BJ (cell line): ENCODE measurements at regions of chr3 and their contacts with region 1.

Region 1: DNA sequence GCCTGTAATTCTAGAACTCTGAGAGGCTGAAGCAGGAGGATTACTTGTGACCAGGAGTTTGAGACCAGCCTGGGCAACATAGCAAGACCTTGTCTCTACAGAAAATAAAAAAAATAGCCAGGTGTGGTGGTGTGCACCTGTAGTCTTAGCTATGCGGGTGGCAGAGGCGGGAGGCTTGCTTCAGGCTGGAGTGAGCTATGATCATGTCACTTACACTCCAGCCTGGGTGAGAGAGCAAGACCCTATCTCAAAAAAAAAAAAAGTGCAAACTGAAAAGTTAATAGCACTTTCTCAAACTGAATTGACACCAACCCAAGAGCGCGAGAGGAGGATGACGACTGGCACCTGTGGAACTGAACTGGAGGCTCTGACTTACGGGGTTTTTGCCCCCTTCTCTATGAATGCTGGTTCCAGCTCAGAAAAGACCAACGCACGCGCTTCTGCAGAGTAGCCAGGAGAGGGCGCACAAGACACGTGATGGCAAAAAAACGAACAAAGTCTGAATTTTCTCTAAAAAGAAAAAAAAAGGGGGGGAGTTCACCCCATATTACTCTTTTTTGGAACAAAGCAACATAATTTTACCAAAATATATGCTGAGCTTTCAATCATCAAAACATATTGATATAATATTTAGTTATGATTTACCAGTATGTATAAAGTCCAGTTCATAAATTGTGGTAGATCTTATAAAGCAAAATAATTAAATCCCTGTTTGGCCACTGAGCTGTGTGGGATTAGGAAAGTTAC is 23.7 kb downstream of the CFAP92 start:
- DNase-seq: no peak
- H3K4me3 ChIP-seq: no peak overlapping the region
- H3K27me3 ChIP-seq: peaks cover 15% of the 10 kb centered on the region
- CTCF ChIP-seq: peak; percentile 92

Region 2: GRCh38 chr3:128814519-128815317 is 155.4 kb before region 1 on chr3:
- CTCF ChIA-PET with region 1: no interaction called
- POLR2A ChIA-PET with region 1: no interaction called
- DNase-seq: no peak
- H3K4me3 ChIP-seq: no peak overlapping the region
- H3K27me3 ChIP-seq: no peaks in the 10 kb centered on the region
- CTCF ChIP-seq: no peak

Region 3: GRCh38 chr3:128910006-128910405 is 60.2 kb before region 1 on chr3:
- CTCF ChIA-PET with region 1: no interaction called
- POLR2A ChIA-PET with region 1: no interaction called
- DNase-seq: no peak
- H3K4me3 ChIP-seq: no peak overlapping the region
- H3K27me3 ChIP-seq: no peaks in the 10 kb centered on the region
- CTCF ChIP-seq: no peak

Region 4: GRCh38 chr3:128950223-128950938 is 19.8 kb before region 1 on chr3:
- CTCF ChIA-PET with region 1: interaction called, 11 read pairs
- POLR2A ChIA-PET with region 1: no interaction called
- DNase-seq: no peak
- H3K4me3 ChIP-seq: no peak overlapping the region
- H3K27me3 ChIP-seq: no peaks in the 10 kb centered on the region; the same call in none of the 2 replicates
- CTCF ChIP-seq: peak; percentile 30; the same call in 1 of the 2 replicates

Region 5: GRCh38 chr3:128984596-128984995 is 14.4 kb after region 1 on chr3:
- CTCF ChIA-PET with region 1: interaction called, 21 read pairs
- POLR2A ChIA-PET with region 1: no interaction called
- DNase-seq: no peak
- H3K4me3 ChIP-seq: no peak overlapping the region
- H3K27me3 ChIP-seq: peaks cover 12% of the 10 kb centered on the region
- CTCF ChIP-seq: no peak

Region 6: GRCh38 chr3:128993461-128994173 is 23.5 kb after region 1 on chr3 and contains the start of gene CFAP92:
- CTCF ChIA-PET with region 1: interaction called, 21 read pairs
- POLR2A ChIA-PET with region 1: no interaction called
- DNase-seq: no peak
- H3K4me3 ChIP-seq: peak within 1 kb of the TSS; percentile 37
- H3K27me3 ChIP-seq: peaks cover 19% of the 10 kb centered on the region
- CTCF ChIP-seq: no peak
- polyA plus RNA-seq, gene CFAP92: not detected in 2 replicates

Region 7: DNA sequence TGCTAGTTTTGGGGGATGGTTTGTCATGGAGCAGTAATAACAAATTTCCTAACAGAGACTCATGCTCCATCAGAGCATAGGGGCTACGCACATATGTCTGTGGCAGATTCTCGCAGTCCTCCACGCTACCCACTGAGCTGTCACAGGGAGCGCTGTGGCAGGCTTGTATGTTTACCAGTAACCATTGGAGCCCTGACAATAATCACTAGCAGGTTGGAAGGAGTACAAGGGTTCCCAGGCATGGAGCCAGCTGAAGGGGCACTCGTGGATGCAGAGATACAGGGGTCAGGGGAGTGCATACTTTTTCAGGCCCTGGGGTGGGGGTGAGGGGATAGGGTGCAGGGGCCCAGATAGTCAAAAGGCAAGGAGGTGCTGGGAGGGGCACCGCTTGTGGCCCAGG is 82.5 kb after region 1 on chr3:
- CTCF ChIA-PET with region 1: interaction called, 31 read pairs
- POLR2A ChIA-PET with region 1: no interaction called
- DNase-seq: no peak
- H3K4me3 ChIP-seq: no peak overlapping the region
- H3K27me3 ChIP-seq: peaks cover 9% of the 10 kb centered on the region
- CTCF ChIP-seq: no peak

Region 8: DNA sequence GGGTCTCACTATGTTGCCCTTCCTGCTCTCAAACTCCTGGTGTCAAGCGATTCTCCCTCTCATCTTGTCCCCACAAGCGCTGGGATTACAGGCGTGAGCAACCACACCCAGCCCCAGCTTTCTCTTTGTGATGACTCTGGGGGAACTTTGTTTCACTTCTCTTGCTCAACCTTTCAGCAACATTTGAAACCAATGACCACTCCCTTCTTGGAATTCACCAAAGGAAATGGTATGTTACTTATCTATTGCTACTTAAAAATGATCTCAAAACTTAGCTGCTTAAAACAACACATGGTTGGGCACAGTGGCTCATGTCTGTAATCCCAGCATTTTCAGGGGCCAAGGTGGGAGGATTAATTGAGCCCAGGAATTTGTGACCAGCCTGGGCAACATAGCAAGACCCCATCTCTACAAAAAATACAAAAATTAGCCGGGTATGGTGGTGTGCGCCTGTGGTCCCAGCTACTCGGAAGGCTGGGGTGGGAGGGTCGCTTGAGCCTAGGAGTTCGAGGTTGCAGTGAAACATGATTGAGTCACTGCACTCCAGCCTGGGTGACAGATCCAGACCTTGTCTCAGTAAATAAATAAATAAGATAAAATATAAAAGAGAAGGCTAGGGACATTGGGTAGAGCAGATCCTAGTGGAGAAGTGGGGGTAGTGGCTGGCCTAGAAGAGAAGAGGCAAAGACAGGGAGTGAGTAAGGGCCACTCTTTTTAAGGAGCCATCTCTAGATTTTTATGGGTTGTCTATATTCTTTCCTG is 269.0 kb after region 1 on chr3:
- CTCF ChIA-PET with region 1: interaction called, 62 read pairs
- POLR2A ChIA-PET with region 1: interaction called, 4 read pairs
- DNase-seq: no peak
- H3K4me3 ChIP-seq: no peak overlapping the region
- H3K27me3 ChIP-seq: no peaks in the 10 kb centered on the region
- CTCF ChIP-seq: no peak

Region 9: DNA sequence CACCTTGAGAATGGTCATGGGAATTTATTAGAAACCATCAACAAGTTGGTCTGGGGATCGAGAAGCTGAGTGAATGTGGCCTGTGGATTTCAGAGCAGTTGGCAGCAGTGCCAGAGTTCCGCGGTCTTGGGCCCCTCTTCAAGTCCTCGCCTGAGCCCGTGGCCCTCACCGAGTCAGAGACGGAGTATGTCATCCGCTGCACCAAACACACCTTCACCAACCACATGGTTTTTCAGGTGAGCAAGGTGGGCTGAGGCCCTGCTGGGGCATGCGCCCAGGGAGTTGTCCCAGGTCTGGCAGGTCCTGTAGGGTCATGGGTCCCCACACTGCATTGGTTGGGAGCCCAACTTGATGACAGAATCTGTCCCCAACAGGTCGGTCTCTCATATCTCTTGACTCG is 301.5 kb after region 1 on chr3:
- CTCF ChIA-PET with region 1: no interaction called
- POLR2A ChIA-PET with region 1: no interaction called
- DNase-seq: no peak
- H3K4me3 ChIP-seq: no peak overlapping the region
- H3K27me3 ChIP-seq: no peaks in the 10 kb centered on the region
- CTCF ChIP-seq: no peak

Region 10: GRCh38 chr3:129316131-129317013 is 346.2 kb after region 1 on chr3:
- CTCF ChIA-PET with region 1: interaction called, 15 read pairs
- POLR2A ChIA-PET with region 1: no interaction called
- DNase-seq: no peak
- H3K4me3 ChIP-seq: peak overlapping the region; percentile 71
- H3K27me3 ChIP-seq: no peaks in the 10 kb centered on the region
- CTCF ChIP-seq: peak; percentile 57